ENCODE measurements at regions of chr12 and their contacts with region 1.

Region 1: DNA sequence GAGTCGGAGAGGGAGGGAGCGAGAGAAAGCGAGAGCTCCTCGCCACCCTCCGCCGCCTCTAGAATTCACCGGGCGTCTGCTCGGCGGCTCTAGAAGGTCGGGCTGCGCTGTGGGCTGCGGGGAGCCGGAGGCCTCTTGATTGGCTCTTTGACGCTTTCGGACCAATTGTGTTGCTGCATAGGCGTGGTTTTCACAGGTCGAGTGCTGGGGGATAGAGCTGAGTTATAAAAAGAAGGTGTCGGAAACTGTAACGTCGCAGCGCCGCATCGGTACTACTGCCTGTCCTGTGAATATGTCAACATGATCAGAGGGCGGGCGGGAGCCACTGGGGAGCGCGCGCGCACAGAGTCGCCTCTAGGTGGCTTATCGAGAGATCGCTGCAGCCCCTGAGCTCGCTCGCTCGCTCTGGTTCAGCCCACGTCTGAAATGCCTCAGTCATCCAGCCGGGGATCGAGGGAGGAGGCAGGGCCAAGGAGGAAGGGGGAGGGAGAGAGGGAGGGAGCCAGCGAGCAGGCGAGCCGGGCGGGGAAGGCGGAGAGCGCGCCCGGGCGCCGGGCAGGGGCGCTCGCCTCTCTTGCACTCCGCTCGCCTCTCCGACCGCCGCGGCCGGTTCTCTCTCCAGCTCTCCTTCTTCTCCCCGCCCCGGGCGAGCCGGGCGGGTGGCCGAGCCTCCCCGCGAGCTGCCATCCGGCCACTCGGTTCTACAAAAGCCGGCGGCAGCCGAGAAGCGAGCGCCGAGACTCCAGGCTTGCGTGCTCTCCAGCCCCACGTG is at the start of gene TBX3:
- DNase-seq: peak; percentile 92 to 93
- ATAC-seq: peak; percentile 86 to 96 (median 94)
- H3K4me3 ChIP-seq: peak within 1 kb of the TSS; percentile 48 to 88 (median 76)
- H3K27ac ChIP-seq: peak within 1 kb of the TSS; percentile 78 to 95 (median 88)
- H3K4me1 ChIP-seq: peaks cover 4 to 34% (median 22%) of the 10 kb centered on the region in 9 donors
- H3K27me3 ChIP-seq: peaks cover 17 to 100% (median 43%) of the 10 kb centered on the region in 7 donors
- CTCF ChIP-seq: peak; percentile 19 to 72 (median 45)
- total RNA-seq, gene TBX3: 4.0 to 32.4 (median 11.4) TPM

Region 2: GRCh38 chr12:114952573-114953271 is 268.4 kb after region 1 on chr12:
- intact Hi-C with region 1: loop called in 3 of 10 experiments (anchors 5 to 10 kb)
- DNase-seq: peak; percentile 70
- ATAC-seq: peak; percentile 93 to 99 (median 97)
- H3K4me3 ChIP-seq: no peak overlapping the region
- H3K27ac ChIP-seq: peak overlapping the region in 6 of 10 donors; percentile 29 to 60 (median 48)
- H3K4me1 ChIP-seq: peaks cover 0 to 15% (median 6%) of the 10 kb centered on the region in 9 donors
- H3K27me3 ChIP-seq: no peaks in the 10 kb centered on the region
- CTCF ChIP-seq: no peak

Region 3: GRCh38 chr12:115166698-115167315 is 482.5 kb after region 1 on chr12:
- intact Hi-C with region 1: loop called in 2 of 10 experiments (anchors 5 kb)
- DNase-seq: no peak
- ATAC-seq: peak in 4 of 8 donors; percentile 42 to 63 (median 50)
- H3K4me3 ChIP-seq: no peak overlapping the region
- H3K27ac ChIP-seq: no peak overlapping the region
- H3K4me1 ChIP-seq: no peaks in the 10 kb centered on the region
- H3K27me3 ChIP-seq: peaks cover 0 to 2% (median 0%) of the 10 kb centered on the region in 7 donors
- CTCF ChIP-seq: peak in 6 of 9 donors; percentile 24 to 64 (median 44)

Region 4: DNA sequence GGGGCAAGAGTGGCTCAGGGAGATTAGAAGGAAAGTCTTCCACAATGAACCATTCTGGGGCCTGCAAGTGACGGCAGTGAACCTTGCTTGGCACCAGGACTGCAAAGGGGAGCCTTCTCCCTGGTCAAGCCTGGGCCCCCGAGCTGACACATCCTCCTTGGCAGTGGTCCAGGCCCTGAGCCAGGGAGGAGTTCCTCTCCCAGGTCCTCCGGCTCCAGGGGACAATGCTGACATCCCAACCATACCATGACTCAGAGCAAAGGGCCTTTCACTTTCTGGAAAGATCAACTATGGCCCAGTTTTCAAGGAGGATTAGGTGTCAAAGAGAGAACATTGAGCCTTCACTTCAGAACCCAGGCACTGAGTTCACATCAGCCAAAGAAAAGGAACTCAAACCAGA is 756.2 kb after region 1 on chr12:
- intact Hi-C with region 1: loop called in 1 of 10 experiments (anchors 2 kb)
- DNase-seq: peak; percentile 64 to 65
- ATAC-seq: peak; percentile 25 to 74 (median 55)
- H3K4me3 ChIP-seq: no peak overlapping the region
- H3K27ac ChIP-seq: peak overlapping the region in 6 of 10 donors; percentile 50 to 78 (median 61)
- H3K4me1 ChIP-seq: peaks cover 0 to 47% (median 8%) of the 10 kb centered on the region in 9 donors
- H3K27me3 ChIP-seq: peaks cover 0 to 5% (median 0%) of the 10 kb centered on the region in 7 donors
- CTCF ChIP-seq: no peak

Region 5: DNA sequence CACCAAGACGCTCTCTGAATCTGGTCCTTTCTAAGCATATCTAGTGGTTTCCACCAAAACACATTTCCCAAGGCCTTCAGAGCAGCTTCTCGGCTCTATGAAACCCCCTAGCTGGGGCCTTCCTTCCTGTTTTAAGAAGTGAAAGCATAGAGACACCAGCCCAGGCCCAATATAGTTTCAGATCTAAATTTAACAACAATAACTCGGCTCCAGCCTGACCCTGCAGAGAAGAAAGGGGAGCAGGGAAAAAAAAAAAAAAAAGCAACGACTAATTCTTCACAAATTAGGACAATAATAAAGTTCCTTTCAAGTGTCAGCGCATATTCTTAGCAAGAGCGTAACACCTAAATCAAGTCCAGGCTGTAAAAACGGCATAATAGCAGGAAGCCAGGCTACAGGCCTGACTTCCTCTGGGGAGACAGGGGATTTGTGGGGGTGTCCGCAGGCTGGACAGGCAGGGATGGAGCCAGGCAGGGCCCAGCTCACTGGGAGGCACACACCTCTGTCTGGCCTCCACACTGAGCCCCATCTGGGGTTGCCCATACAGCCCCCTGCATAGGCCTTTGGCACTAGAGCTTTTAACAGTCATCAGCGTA is 820.1 kb after region 1 on chr12:
- intact Hi-C with region 1: loop called in 1 of 10 experiments (anchors 5 kb)
- DNase-seq: peak; percentile 19 to 55
- ATAC-seq: peak; percentile 65 to 91 (median 82)
- H3K4me3 ChIP-seq: no peak overlapping the region
- H3K27ac ChIP-seq: peak overlapping the region; percentile 16 to 82 (median 74)
- H3K4me1 ChIP-seq: peaks cover 0 to 57% (median 17%) of the 10 kb centered on the region in 9 donors
- H3K27me3 ChIP-seq: no peaks in the 10 kb centered on the region
- CTCF ChIP-seq: no peak

Region 6: DNA sequence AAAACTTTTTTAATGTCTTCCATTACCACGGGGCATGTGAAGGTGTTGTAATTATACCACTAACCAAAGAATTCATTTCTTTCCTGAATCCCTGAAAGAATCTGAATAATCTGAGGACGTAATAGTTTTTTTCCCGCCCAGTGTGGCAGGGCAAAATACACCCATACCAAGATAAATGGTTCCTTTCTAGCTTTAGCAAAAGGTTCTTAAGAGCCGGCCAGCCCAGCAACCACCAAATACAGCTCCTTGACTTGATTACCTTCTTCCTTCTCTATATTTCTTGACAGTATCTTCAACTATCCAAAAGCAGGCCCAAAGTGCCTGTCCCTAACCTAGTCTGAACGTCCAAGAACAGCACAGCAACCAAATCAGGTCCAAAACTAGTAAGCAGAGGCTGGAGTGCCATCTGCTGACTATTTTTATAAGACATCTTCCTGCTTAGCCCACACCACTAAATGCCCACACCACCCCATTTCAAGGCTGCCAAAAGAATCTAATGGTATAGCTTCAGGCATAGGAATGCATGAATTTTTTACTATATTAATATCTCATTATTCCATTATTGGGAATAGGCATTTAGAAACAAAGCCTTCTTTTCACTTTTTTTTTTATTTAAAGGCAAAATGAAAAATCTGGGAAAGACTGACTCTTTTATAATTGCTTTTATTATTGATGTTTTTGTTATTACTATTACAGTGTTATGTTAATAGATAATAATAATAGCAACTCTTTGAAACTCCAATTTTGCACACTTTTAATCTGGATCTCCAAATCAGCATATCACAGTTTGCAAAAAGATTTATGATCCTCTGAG is 1068.8 kb after region 1 on chr12:
- intact Hi-C with region 1: loop called in 2 of 10 experiments (anchors 1 to 5 kb)
- DNase-seq: peak in 1 of 2 donors; percentile 59
- ATAC-seq: peak; percentile 81 to 96 (median 94)
- H3K4me3 ChIP-seq: no peak overlapping the region
- H3K27ac ChIP-seq: peak overlapping the region in 2 of 10 donors; percentile 1 to 9
- H3K4me1 ChIP-seq: peaks cover 0 to 34% (median 16%) of the 10 kb centered on the region in 9 donors
- H3K27me3 ChIP-seq: peaks cover 0 to 46% (median 29%) of the 10 kb centered on the region in 7 donors
- CTCF ChIP-seq: peak; percentile 49 to 81 (median 72)

Measured in heart right ventricle (tissue), 16 donors.